Posterior vena cava (tissue), 2 donors: ENCODE measurements at regions of chr18 and their contacts with region 1.

Region 1: DNA sequence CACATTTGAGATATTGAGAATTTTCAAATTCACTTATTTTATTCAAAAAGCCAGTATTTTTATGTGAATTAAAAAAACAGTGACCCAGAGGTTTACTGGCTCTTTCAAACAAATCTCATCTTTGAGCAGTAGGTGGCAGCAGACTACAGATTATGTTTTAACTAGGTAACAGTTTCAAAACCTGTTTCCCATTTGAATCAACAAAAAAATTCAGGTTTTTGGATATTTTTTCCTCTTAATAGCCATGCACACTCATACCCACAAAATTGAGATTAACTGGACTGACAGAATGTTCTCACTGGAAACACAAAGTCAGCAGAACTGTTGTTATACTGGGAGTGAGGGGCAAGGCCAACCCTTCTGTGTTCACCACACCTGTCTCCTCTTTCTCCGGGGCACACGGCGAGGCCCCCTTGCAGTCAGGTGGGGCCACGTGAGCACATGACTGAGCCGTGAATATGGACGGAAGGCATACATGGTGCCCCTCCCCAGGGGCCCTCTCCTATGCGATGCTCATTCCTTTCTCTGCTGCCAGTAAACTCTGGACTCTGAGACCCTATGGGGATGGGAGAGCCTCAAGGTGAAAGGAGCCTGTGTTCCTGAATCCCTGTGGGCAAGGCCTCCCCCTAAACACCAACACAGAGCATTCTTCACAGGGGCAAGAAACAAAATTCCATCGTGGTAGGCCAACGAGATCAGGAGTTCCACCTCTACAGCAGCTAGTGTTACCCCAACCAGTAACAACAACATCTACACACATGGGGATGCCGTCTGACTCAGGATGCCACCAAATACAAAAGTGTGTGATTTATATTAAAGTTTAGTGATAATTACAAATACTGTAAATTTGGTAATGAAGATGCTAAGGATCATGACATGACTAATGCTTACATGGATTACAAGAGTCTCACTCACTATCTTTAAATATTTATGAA is 80.4 kb downstream of the LPIN2 start:
- DNase-seq: peak; percentile 45

Region 2: GRCh38 chr18:1766464-1766863 is 1166.0 kb before region 1 on chr18:
- intact Hi-C with region 1: no loop called
- DNase-seq: no peak

Region 3: DNA sequence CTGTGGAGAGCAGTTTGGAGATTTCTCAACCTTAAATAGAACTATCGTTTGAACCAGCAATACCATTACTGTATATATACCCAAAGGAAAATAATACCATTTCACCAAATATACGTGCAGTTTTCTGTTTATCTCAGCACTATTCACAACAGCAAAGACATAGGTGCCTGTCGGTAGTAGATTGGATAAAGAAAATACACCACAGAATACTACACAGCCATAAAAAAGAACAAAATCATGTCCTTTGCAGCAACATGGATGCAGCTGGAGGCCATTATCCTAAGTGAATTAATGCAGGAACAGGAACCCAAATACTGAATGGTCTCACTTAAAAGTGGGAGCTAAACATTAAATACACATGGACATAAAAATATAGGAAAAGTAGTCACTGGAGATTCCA is 195.7 kb before region 1 on chr18:
- intact Hi-C with region 1: no loop called
- DNase-seq: no peak

Region 4: DNA sequence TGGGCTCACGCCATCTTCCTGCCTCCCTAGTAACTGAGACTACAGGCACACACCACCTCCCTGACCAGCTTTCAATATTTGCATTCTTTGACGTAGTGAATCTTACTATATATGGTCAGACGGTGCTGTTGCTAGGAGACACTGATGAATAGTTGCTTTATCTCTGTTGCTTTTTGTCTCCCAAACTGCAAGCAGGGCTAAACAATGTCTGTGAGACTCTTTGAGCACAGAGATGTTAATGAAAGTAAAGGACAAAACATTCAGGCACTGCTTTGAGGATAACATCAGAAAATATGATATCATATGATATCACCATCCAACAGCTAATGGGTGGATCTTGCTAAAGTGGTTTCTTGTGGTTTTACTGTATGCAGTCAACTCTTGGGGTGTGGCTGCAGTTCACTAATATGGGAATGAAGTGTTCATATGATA is 42.7 kb before region 1 on chr18:
- intact Hi-C with region 1: no loop called
- DNase-seq: no peak

Region 5: GRCh38 chr18:3062798-3063680 is 130.5 kb after region 1 on chr18:
- intact Hi-C with region 1: loop called (anchors 5 to 10 kb)
- DNase-seq: peak; percentile 85

Region 6: DNA sequence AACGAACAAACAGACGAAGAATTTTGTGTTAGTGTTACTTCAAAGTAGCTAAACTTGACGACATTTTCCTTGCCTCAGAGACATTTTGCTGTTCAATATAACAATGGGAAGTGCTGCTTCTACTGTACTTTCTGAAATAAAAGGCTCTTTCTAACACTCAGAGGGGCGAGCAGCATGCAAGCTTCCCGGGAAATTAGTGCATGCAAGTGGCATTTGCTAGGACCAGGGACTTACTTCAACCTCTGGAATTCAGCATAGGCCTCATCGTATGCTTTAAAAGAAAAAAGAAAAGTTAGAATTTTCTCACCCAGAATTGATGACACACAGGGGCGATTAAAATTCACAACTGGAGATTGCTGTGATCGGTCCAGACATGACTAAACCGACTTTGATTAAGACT is 143.0 kb after region 1 on chr18:
- intact Hi-C with region 1: no loop called
- DNase-seq: no peak

Region 7: DNA sequence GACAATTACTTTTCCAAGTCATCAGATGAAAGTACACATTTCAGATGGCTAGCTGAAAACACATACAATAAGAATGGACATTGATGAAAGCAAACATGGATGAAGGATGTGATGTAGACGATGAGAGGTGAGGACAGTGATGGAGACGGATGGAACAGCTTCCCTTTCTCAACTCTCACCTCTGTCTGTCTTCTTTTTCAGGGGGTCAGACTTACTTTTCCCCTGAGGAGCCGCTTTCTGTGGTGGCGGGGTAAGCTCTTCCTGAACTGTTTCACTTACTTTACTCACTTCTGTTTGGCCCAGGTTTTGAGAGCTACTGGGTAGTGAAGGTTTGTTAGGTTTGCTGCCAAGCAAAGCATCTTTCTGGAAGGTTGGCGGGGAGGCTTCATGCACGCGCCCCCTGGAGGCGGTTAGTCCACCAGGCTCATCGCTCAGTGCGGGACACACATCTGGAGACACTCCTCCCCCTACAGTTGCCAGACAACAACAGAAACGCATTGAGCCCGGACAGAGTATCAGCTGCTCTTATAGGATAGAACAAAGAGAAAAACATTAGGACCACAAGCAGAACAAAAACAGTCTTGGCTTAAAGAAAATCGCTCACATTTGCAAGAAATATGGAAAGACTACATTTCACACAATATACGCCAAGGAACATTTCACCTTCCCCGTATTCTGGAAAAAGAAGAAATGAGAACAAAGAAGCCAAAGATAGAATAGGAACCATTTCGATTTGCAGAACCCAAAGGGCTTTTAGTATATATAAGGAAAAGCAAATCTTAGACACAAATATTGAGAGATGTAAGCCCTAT is 196.7 kb after region 1 on chr18:
- intact Hi-C with region 1: loop called in 1 of 2 experiments (anchors 5 kb)
- DNase-seq: peak; percentile 93